ENCODE measurements at regions of chr6 and their contacts with region 1.

Region 1: DNA sequence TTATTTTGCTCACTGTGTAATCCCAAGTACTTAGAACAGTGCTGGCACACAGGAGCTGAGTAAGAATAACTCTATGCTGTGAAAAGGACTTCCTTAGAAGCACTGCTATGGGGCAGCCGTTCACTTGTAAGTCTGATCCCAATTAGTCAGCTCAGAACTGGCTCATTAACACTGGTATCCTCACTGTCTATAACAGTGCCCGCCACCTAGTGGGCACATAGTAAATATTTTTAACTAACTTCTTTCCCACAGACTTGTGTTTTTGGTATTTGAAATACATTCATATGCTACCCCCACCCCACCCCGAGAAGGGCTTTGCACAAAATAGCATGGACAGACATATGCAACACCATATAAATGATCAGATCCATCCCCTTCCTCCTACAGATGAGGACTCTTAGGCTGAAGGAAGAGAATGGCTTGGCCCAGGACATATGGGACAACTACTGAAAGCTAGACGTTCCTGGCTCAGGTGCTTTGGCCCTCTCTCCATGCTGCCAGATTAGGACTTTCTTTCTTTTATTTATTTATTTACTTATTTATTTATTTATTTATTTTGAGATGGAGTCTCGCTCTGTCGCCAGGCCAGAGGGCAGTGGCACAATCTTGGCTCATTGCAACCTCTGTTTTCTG is 47.1 kb downstream of the DST start:
- DNase-seq: peak; percentile 80
- H3K4me3 ChIP-seq: no peak overlapping the region
- H3K27ac ChIP-seq: no peak overlapping the region
- H3K4me1 ChIP-seq: no peaks in the 10 kb centered on the region
- H3K27me3 ChIP-seq: no peaks in the 10 kb centered on the region
- CTCF ChIP-seq: peak; percentile 81

Region 2: DNA sequence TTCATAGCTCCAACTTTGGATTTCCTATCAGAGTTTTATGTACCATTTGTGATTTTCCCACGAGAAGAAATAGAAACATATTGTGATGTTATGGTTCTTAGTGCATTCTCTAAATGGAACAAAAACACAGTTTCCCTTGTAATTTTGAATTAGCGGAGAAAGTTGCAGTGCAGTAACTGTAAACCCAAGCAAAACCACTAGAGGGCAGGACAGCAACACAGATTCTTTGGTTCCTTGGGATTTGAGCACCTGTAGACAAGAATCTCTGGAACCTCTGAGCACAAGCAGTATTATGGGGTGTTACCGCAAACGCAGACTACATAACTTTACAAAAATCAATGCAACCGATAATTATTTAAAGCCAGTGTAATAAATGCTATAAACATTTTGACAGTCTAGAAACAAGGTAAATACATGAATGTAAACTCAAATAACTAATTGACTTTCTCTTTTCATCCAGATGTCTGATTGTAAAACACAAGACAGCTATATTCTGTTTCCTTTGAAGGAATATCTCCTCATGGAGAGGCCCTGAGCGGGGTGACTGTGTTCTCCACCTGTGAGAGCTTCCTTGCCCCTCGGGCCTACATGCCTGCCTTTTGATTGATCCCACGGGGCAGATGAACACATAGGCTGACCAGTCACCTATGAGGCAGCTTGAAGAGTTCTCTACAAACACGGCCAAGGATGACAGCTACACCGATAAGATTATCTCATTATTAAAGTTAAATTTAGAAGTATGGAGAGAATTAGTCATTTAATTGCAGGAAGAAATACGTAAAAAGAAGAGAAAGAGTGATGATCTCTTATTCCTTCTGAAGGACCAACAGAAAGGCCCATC is 280.7 kb before region 1 on chr6:
- CTCF ChIA-PET with region 1: interaction called, 6 read pairs
- POLR2A ChIA-PET with region 1: no interaction called
- intact Hi-C with region 1: loop called (anchors 1 kb)
- DNase-seq: peak; percentile 62
- H3K4me3 ChIP-seq: no peak overlapping the region
- H3K27ac ChIP-seq: no peak overlapping the region
- H3K4me1 ChIP-seq: no peaks in the 10 kb centered on the region
- H3K27me3 ChIP-seq: no peaks in the 10 kb centered on the region
- CTCF ChIP-seq: peak; percentile 95

Region 3: DNA sequence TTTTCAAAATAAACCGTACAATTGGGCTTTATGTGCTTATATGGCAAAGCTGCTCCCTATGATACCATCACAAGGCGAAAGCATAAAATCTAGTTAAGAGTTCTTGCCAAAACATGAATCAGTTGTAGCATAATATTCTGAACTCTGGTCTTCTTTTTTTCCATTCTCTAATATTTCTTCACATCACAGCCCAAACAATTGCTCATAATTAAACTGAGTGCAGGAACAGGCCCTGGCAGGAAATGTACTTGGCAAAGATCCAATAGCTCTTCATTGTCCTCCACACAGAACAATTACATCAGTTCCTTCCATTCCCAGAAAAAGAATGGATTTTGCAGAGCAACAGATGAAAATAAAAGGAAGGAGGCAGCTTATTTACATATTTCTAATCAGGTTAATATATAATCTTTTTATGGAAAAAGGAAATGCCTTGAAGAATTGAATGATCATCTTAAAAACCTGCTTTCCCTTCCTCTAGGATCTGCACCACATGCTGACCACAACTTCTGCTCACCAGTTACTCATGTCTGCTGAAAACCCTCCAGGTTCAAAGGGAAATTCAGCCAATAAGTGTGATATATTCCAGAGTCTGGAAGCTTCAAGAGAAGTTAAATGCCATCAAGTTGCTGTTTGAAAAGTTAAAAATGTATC is 224.9 kb before region 1 on chr6:
- CTCF ChIA-PET with region 1: interaction called, 10 read pairs
- POLR2A ChIA-PET with region 1: no interaction called
- intact Hi-C with region 1: no loop called
- DNase-seq: peak; percentile 91
- H3K4me3 ChIP-seq: no peak overlapping the region
- H3K27ac ChIP-seq: peak overlapping the region; percentile 79
- H3K4me1 ChIP-seq: peaks cover 33% of the 10 kb centered on the region
- H3K27me3 ChIP-seq: no peaks in the 10 kb centered on the region
- CTCF ChIP-seq: no peak

Region 4: GRCh38 chr6:56549014-56549413 is 46.6 kb before region 1 on chr6:
- CTCF ChIA-PET with region 1: interaction called, 19 read pairs
- POLR2A ChIA-PET with region 1: no interaction called
- intact Hi-C with region 1: no loop called
- DNase-seq: peak; percentile 53
- H3K4me3 ChIP-seq: no peak overlapping the region
- H3K27ac ChIP-seq: no peak overlapping the region
- H3K4me1 ChIP-seq: peaks cover 16% of the 10 kb centered on the region
- H3K27me3 ChIP-seq: no peaks in the 10 kb centered on the region
- CTCF ChIP-seq: peak; percentile 17; the same call in 1 of the 2 replicates

Region 5: DNA sequence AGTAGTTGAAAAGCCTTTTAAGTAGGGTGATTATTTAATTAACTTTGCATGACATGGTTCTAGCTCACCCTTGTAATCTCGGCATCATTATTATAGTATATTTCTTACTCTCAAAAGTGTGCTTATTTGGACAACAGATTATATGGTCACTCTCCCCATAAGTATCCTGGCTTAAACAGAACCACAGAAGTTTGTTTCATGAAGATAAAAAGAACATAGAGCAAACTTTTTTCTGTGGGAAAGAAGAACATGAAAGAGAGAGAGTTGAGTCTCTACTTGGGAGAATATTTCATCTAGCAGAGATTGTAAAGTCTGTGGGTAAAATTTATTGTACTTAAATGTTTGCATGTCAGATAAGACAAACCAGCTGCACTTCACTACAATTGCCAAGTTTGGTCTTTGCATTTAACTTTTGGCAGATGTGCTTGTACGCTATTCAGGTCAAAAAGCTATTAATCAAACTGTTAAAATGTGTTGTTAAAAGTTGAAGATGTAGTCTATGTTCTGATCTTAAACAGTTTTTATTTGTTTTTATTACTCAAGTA is 688.4 kb after region 1 on chr6:
- CTCF ChIA-PET with region 1: no interaction called
- POLR2A ChIA-PET with region 1: no interaction called
- intact Hi-C with region 1: no loop called
- DNase-seq: no peak
- H3K4me3 ChIP-seq: no peak overlapping the region
- H3K27ac ChIP-seq: no peak overlapping the region
- H3K4me1 ChIP-seq: no peaks in the 10 kb centered on the region
- H3K27me3 ChIP-seq: no peaks in the 10 kb centered on the region
- CTCF ChIP-seq: no peak